GM10248 (cell line): ENCODE measurements at regions of chr1 and their contacts with region 1.

Region 1: DNA sequence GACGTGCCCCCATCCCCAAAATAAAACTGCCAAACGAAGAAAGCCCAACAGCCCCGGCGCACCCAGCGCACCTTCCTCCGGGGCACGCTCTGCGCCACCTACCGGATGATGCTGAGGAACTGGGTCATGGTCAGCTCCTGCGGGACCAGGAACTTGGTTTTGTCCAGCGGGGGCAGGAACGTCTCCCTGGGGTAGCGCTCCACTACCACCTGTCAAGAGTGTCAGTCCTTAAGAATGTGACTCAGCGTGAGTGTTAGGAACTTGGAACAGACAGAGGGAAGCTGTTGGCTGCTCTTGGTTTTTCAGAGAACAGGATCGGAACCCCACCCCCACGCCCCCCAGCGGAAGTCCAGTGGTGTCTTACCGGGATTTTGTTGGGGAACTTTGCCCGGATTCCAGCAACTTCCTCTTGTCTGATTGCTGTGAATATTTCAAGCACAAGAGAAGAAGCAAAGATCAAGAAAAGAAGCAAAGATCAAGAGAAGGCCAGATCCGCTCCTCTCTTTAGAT is 431 bp downstream of the MAP1LC3C start:
- DNase-seq: peak; percentile 61
- CTCF ChIP-seq: peak; percentile 80

Region 2: GRCh38 chr1:241963722-241964121 is 34.7 kb before region 1 on chr1:
- CTCF ChIA-PET with region 1: no interaction called
- POLR2A ChIA-PET with region 1: no interaction called
- DNase-seq: no peak
- CTCF ChIP-seq: no peak

Region 3: GRCh38 chr1:241979071-241979470 is 19.4 kb before region 1 on chr1:
- CTCF ChIA-PET with region 1: interaction called, 10 read pairs
- POLR2A ChIA-PET with region 1: no interaction called
- DNase-seq: no peak
- CTCF ChIP-seq: no peak

Region 4: DNA sequence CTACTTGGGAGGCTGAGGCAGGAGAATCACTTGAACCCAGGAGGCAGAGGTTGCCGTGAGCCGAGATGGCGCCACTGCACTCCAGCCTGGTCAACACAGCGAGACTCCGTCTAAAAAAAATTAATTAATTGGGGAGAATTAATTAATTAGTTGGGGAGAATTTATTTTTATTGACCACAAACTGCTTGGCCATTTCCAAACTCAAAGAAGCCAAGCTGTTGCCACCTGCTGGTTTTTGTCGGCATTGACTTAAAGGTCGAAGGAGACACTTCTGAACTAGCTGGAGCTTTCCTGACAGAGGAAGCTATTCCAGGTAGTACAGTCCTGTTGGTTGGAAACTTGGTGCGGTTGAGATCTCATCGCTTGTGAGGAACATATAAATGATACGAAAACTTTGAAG is 12.7 kb before region 1 on chr1:
- CTCF ChIA-PET with region 1: interaction called, 25 read pairs
- POLR2A ChIA-PET with region 1: interaction called, 3 read pairs
- DNase-seq: peak; percentile 62
- CTCF ChIP-seq: peak; percentile 42

Region 5: GRCh38 chr1:242034393-242034792 is 35.9 kb after region 1 on chr1:
- CTCF ChIA-PET with region 1: no interaction called
- POLR2A ChIA-PET with region 1: no interaction called
- DNase-seq: no peak
- CTCF ChIP-seq: no peak